Activated CD4-positive, alpha-beta T cell treated with anti-CD3 and anti-CD28 coated beads, Interleukin-2, amount 10 ng/mL, durations not matched to agents 7 days and 5 days (primary cell): ENCODE measurements at regions of chr22 and their contacts with region 1.

Region 1: DNA sequence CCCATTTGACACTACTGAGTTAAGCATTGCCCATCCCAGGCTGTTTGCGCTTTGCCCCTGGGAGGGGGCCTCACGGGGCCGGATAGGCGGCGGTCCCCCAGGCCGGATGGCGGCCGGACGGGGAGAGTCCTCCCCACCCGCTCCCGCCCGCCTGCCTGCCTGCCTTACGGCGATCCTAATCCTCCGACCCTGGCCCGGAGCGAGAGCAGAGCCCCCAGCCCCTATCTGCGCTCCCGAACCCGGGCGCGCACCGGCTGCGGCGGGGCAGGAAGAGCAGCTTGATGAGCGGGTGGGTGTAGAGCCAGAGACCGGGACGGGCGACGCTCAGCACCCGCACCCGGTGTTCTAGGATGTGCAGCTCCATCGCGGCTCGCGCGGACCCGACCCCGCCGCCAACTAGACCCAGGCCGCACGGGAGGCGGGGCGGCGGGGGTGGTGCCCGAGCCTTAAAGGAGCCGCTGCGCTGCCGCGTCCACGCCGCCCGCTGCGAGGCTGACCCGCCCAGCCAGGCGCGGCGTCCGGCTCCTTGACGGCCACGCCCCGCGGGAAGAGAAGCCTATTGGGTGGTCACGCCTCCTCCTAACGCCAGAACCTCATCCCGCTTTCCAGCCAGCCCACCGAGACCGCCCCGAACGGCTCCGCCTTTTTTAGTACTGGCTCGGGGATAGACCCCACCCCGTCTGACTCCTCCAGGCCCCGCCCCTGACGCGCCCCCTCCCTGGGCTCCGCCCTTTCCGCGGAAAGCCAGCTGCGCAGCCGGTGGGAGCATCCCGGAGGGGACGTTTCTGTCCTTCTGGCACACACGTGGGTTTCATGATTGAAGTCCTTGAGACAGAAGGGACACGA is at the start of gene CASTOR1:
- DNase-seq: peak; percentile 94
- H3K4me3 Mint-ChIP-seq: peak within 1 kb of the TSS; percentile 80
- H3K27ac Mint-ChIP-seq: peak within 1 kb of the TSS; percentile 86
- H3K4me1 Mint-ChIP-seq: peaks cover 63% of the 10 kb centered on the region
- H3K27me3 Mint-ChIP-seq: no peaks in the 10 kb centered on the region
- total RNA-seq, gene CASTOR1: 16.7 to 20.0 TPM

Region 2: DNA sequence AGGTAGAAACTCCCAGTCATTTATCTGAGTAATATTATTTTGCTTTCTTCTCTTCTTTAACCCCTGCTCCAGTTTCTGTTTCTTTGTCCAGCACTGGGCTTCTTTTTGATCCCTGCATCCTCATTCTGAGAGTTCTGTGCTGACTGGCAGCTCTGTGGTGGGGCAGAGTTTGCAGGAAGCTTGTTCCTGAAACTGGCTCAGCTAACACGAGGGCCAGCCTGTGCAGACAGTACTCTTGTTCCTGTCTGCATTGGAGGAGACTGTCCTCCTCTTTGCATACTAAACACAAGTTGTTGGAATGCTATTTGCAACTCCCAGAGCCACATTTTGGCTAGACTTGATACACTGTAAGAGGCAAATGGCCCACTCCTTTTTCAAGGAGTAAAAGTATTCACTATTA is 302.2 kb before region 1 on chr22:
- CTCF ChIA-PET with region 1: no interaction called
- POLR2A ChIA-PET with region 1: no interaction called
- DNase-seq: no peak
- H3K4me3 Mint-ChIP-seq: no peak overlapping the region
- H3K27ac Mint-ChIP-seq: no peak overlapping the region
- H3K4me1 Mint-ChIP-seq: peaks cover 7% of the 10 kb centered on the region
- H3K27me3 Mint-ChIP-seq: no peaks in the 10 kb centered on the region

Region 3: GRCh38 chr22:30262917-30263741 is 26.2 kb before region 1 on chr22:
- CTCF ChIA-PET with region 1: interaction called, 31 read pairs
- POLR2A ChIA-PET with region 1: no interaction called
- DNase-seq: peak; percentile 81
- H3K4me3 Mint-ChIP-seq: peak overlapping the region; percentile 99
- H3K27ac Mint-ChIP-seq: peak overlapping the region; percentile 79
- H3K4me1 Mint-ChIP-seq: peaks cover 62% of the 10 kb centered on the region
- H3K27me3 Mint-ChIP-seq: no peaks in the 10 kb centered on the region

Region 4: GRCh38 chr22:30305519-30305905 is 16.2 kb after region 1 on chr22:
- CTCF ChIA-PET with region 1: interaction called, 138 read pairs
- POLR2A ChIA-PET with region 1: interaction called, 6 read pairs
- DNase-seq: peak; percentile 80
- H3K4me3 Mint-ChIP-seq: peak overlapping the region; percentile 78
- H3K27ac Mint-ChIP-seq: peak overlapping the region; percentile 92
- H3K4me1 Mint-ChIP-seq: peaks cover 99% of the 10 kb centered on the region
- H3K27me3 Mint-ChIP-seq: no peaks in the 10 kb centered on the region

Region 5: GRCh38 chr22:30356449-30357235 is 67.3 kb after region 1 on chr22 and contains the starts of genes CCDC157 and SF3A1:
- CTCF ChIA-PET with region 1: interaction called, 18 read pairs
- POLR2A ChIA-PET with region 1: no interaction called
- DNase-seq: peak; percentile 89
- H3K4me3 Mint-ChIP-seq: peak within 1 kb of the TSS; percentile 90
- H3K27ac Mint-ChIP-seq: peak within 1 kb of the TSS; percentile 90
- H3K4me1 Mint-ChIP-seq: peaks cover 52% of the 10 kb centered on the region
- H3K27me3 Mint-ChIP-seq: no peaks in the 10 kb centered on the region
- total RNA-seq, gene CCDC157: 3.5 to 4.3 TPM
- total RNA-seq, gene SF3A1: 247 to 279 TPM

Region 6: DNA sequence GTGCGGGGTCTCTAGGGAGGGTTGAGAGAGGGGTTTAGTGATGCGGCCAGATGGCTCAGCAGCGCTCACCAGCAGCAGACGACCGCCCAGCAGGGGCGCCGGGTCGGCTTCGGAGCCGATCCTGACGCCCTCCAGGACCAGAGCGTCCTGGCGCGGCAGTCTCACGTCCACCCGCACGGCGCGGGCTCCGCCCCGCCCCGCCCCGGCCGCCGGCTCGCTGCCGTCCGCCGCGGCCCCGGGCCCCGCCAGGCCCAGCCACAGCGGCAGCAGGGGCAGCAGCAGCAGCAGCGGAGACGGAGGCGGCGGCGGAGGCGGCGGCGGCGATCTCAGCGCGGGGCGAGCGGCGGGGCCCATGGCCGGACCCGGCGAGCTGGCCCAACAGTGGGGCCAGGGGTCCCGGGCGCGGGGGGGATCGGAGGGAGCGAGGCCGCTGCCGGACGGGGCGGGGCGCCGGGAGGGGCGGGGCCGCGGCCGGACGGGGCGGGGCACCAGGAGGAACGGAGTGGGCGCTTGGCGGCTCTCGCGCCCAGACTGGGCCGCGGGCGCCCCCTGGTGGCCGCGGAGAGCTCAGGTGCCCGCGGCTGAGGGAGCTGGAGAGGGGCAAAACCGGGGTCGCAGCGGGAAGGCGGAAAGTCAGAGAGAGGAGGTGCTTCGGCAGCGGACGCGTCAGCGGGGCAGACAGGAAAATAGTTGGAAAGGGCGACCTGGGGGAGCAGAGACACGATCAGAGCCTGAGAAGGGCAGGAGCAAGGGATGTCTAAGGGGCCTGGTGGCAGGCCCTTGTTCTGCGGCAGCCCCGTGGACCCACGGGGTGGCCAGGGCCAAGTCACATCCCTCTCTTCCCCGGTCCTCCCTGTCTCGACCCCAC is 97.8 kb after region 1 on chr22 and contains the start of gene RNF215:
- CTCF ChIA-PET with region 1: interaction called, 71 read pairs
- POLR2A ChIA-PET with region 1: no interaction called
- DNase-seq: peak; percentile 75
- H3K4me3 Mint-ChIP-seq: peak within 1 kb of the TSS; percentile 77
- H3K27ac Mint-ChIP-seq: peak within 1 kb of the TSS; percentile 88
- H3K4me1 Mint-ChIP-seq: peaks cover 29% of the 10 kb centered on the region
- H3K27me3 Mint-ChIP-seq: no peaks in the 10 kb centered on the region
- total RNA-seq, gene RNF215: 9.8 to 9.9 TPM

Region 7: GRCh38 chr22:30423982-30424963 is 134.9 kb after region 1 on chr22:
- CTCF ChIA-PET with region 1: interaction called, 18 read pairs
- POLR2A ChIA-PET with region 1: no interaction called
- DNase-seq: peak; percentile 100
- H3K4me3 Mint-ChIP-seq: peak overlapping the region; percentile 99
- H3K27ac Mint-ChIP-seq: peak overlapping the region; percentile 99
- H3K4me1 Mint-ChIP-seq: peaks cover 63% of the 10 kb centered on the region
- H3K27me3 Mint-ChIP-seq: no peaks in the 10 kb centered on the region